Sigmoid colon (tissue), 7 donors: ENCODE measurements at regions of chr20 and their contacts with region 1.

Region 1: GRCh38 chr20:51703400-51704287 is 64.5 kb downstream of the ATP9A start:
- DNase-seq: no peak
- H3K4me3 ChIP-seq: no peak overlapping the region
- H3K27ac ChIP-seq: no peak overlapping the region
- H3K4me1 ChIP-seq: peaks cover 0 to 9% (median 0%) of the 10 kb centered on the region in 4 donors
- H3K27me3 ChIP-seq: no peaks in the 10 kb centered on the region
- CTCF ChIP-seq: no peak
- EP300 ChIP-seq: no peak
- POLR2A ChIP-seq: no peak

Region 2: DNA sequence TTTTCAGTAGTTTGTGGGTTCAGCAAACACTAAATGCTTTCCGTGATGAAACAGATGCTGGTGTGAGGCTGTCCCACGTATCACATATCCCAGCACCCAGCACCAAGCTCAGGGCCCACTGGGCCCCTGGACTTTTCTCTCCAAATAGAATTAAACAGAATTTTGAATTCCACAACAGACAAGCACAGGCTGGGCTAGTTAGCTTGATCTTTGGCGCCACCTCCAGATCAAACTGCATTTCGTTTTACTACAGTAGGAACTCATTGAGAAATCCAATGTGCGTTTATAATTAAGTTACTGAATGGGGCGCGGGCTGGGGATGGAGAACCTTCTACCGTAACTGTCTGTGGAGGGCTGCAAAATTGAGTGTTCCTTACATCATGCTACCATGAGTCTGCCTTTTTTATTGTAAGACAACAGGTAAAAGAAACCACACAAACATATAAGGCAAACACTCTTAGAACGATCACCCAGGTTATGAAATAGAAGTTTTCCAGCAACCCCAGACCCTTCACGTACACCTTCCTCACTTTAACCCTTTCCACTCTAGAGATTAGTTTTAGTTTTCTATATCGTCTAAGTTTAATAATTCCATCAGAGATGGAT is 380.1 kb after region 1 on chr20:
- intact Hi-C with region 1: loop called (anchors 10 kb)
- DNase-seq: peak; percentile 66
- H3K4me3 ChIP-seq: no peak overlapping the region
- H3K27ac ChIP-seq: no peak overlapping the region
- H3K4me1 ChIP-seq: no peaks in the 10 kb centered on the region
- H3K27me3 ChIP-seq: no peaks in the 10 kb centered on the region
- CTCF ChIP-seq: peak in 3 of 4 experiments; percentile 39 to 42 (median 40)
- EP300 ChIP-seq: no peak
- POLR2A ChIP-seq: no peak